ENCODE measurements at regions of chr2 and their contacts with region 1.

Region 1: DNA sequence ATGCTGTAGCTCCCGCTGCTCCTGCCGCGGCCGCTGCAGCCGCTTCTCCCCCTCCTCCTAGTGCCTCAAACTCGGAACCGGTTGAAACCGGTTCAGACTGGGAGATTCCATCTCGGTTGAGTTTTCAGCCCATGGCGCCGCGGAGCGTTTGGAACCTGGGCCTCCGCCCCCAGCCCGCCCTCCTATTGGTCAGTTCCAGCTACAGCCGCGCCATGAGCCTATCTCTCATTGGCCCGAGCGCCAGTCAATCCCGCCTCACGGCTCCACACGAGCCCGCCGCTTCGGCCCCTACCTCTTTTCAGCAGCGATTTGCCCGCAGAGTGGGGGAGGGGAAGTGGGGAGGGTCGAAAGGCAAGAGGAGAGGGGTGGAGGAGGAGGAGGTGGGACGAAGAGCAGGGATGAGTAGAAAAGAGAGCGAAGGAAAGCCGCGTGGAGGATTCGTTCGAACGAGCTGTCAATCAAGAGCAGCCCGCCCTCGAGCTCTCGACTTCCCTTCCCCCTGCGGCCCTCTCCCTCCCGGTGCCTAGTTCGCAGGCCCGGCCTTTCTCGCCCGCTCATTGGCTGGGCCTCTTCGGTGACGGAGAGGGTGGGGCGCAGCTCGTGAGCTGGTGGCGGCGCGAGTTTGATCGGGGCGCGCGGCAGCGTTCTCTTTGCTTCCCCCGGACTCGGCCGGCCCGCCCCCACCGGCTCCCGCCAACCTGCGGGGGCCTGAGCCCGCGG is at the start of gene XPO1:
- DNase-seq: peak; percentile 97 to 99
- H3K4me3 ChIP-seq: peak within 1 kb of the TSS; percentile 86 to 98
- H3K27ac ChIP-seq: peak within 1 kb of the TSS; percentile 96 to 98
- H3K4me1 ChIP-seq: peaks cover 0 to 16% of the 10 kb centered on the region in 2 donors
- H3K27me3 ChIP-seq: no peaks in the 10 kb centered on the region
- CTCF ChIP-seq: no peak
- total RNA-seq, gene XPO1: 47.9 TPM

Region 2: DNA sequence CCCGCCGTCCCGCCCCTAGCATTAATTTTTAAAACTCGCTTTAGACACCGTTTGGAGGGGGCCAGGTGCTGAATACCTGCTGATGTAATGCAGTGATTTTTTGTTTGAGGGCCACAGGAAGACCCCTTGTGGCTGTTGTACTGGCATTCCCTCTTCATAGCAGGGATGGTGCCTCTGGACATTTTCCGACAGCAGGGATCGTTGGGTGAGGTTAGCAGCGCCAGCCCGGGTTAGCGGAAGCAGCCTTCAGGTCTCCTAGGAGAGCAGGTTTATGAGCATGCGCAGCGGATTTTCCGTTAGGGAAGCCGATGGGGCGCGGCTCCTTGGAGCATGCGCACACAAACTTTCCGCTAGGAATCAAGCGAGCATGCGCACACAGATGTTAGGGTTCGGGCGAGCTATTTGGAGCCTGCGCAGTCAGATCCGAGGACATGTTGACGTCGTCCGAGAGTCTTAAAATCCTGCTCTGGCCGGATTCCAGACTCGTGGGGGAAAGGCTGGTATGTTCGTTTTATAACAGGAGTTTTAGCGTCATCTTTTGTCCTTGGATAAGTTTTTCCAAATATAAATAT is 393.6 kb before region 1 on chr2:
- intact Hi-C with region 1: loop called (anchors 2 kb)
- DNase-seq: peak; percentile 79 to 97
- H3K4me3 ChIP-seq: peak overlapping the region; percentile 50 to 72
- H3K27ac ChIP-seq: peak overlapping the region; percentile 62 to 71
- H3K4me1 ChIP-seq: peaks cover 0 to 9% of the 10 kb centered on the region in 2 donors
- H3K27me3 ChIP-seq: no peaks in the 10 kb centered on the region
- CTCF ChIP-seq: no peak

Region 3: DNA sequence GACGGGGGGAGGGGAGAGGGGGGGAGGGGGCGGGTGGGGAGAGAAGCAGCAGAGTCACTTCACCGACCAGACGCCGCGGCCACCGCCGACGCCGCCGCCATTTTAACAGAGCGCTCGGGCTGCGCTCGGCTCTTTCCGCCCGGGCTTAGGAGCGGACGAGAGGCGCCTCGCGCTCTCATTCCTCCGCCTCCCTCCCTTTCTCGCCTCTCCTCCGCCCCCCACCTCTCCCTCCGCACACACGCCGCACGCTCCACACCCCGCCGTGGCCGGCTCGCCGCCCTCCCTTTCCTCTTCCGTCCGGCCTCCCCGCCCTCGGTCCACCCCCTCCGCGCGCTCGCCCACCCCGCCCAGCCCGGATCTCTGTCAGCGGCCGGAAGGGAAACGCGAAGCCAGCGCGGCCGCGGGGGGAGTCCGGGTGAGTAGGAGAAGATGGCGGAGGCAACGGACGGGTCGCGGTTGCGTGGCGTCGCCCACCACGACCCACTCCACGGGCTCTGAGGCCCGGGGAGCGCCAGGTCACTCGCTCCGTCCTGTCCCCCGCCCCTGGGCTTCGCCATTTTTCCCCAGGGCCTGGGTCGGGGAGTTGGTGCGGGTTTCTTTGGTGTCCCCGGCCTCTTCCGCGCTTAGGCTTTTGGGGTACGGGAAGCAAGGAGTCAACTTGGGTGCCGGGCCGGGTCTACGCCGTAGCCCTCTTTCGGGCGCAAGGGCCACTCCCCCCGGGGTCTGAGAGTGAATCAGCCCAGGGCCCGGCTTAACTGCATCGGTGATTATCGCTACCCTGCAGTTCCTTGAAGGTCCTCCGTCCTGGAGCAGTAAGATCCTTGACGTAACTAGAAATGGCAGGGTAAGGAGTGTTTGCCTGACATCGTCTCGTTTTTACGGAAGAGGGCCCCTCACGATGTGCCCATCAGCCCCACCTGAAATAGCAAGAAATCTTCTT is 67.1 kb before region 1 on chr2 and contains the start of gene USP34:
- intact Hi-C with region 1: loop called (anchors 1 kb)
- DNase-seq: peak; percentile 65 to 96
- H3K4me3 ChIP-seq: peak within 1 kb of the TSS; percentile 89 to 96
- H3K27ac ChIP-seq: peak within 1 kb of the TSS; percentile 98 to 99
- H3K4me1 ChIP-seq: peaks cover 0 to 9% of the 10 kb centered on the region in 2 donors
- H3K27me3 ChIP-seq: no peaks in the 10 kb centered on the region
- CTCF ChIP-seq: peak in 1 of 3 experiments; percentile 9
- total RNA-seq, gene USP34: 59.3 TPM

Region 4: DNA sequence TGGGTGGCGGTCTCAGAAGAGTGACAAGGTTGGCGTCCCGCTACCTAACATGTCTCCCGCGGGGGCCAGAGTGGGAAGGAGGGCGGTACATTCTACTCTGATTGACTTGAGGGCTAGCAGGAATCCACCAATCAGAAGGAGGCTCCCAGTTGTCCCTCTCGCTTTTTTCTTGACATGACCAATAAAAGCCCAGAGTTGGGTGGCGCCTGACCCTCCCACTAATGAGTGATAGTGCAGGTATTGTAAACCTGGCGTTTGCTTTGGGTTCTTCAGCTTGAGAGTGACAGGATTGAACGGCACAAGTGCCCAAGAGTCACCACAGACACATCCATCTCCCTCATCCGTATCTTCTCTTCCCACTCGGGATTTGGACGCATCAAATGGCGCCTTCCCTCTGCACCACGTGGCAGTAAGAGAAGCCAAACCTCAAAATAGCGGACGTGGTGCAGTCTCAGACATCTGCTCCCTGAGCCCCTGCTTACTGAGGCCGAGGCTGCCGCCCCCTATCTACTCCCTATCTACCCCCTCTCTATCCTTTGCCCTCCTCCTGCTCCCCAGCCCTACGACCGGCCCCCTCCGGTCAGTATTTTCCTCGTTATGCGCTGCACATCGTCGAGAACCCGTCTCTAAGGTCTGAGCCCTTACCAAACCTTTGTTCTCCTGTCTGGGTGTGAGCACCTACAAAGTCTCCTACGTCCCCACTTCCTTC is 316.3 kb after region 1 on chr2:
- intact Hi-C with region 1: loop called (anchors 1 kb)
- DNase-seq: peak; percentile 76 to 94
- H3K4me3 ChIP-seq: peak overlapping the region; percentile 76 to 94
- H3K27ac ChIP-seq: peak overlapping the region; percentile 93 to 95
- H3K4me1 ChIP-seq: peaks cover 0 to 4% of the 10 kb centered on the region in 2 donors
- H3K27me3 ChIP-seq: no peaks in the 10 kb centered on the region
- CTCF ChIP-seq: no peak

Region 5: DNA sequence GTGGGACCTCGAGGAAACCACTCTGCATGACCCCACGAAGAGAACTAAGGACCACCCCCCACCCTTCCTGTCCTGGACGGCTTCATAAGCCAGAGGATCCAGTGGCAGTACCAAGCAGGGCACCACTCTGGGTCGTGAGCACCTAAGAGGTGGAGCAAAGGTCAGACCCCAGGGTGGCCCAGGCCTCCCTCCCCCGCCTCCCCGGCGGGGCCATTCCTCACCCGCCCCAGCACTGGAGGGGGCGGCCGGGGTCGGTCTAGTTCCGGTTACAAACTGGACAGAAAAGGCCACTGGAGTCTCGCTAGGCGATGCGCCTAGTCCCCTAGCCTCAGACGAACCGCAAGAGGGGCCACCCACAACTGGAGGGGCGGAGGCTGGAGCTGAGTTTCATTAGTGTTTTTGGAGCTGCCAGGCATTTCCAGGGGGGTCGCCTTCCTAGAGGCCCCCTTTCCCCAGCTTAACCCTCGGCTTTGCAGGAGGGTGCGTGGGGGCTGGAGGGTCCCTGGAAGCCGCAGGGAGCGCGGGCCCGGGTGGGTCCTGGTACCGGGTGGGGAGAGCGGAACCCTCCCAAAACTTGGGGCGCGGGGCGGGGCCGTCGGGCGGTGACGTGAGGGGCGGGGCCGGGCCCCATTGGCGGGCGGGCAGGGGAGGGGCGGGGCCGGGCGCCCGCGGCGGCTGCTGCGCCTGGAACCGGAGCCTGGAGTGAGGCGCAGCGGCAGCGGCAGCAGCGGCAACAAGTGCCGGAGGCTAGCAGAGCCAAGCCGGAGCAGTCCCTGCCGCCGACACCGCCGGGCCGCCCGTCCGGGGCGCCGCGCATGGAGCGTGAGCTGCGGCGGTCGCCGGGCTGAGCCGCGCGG is 657.3 kb after region 1 on chr2 and contains the start of gene B3GNT2:
- intact Hi-C with region 1: loop called (anchors 5 kb)
- DNase-seq: peak in 1 of 2 donors; percentile 88
- H3K4me3 ChIP-seq: peak within 1 kb of the TSS; percentile 90 to 97
- H3K27ac ChIP-seq: peak within 1 kb of the TSS; percentile 90 to 91
- H3K4me1 ChIP-seq: peaks cover 0 to 21% of the 10 kb centered on the region in 2 donors
- H3K27me3 ChIP-seq: no peaks in the 10 kb centered on the region
- CTCF ChIP-seq: no peak
- total RNA-seq, gene B3GNT2: 15.2 TPM